ENCODE measurements at regions of chr19 and their contacts with region 1.

Region 1: GRCh38 chr19:48492925-48493717 is 18.5 kb downstream of the LMTK3 start:
- DNase-seq: peak; percentile 95
- ATAC-seq: peak; percentile 86

Region 2: GRCh38 chr19:48588670-48589399 is 95.7 kb after region 1 on chr19:
- intact Hi-C with region 1: loop called (anchors 5 kb)
- DNase-seq: peak; percentile 97
- ATAC-seq: peak; percentile 92